Mammary epithelial cell (primary cell): ENCODE measurements at regions of chr7 and their contacts with region 1.

Region 1: GRCh38 chr7:130869918-130870317 is 135.9 kb upstream of the KLF14 start:
- DNase-seq: no peak
- H3K4me3 ChIP-seq: no peak overlapping the region
- H3K27ac ChIP-seq: no peak overlapping the region
- H3K4me1 ChIP-seq: peaks cover 18% of the 10 kb centered on the region
- H3K27me3 ChIP-seq: no peaks in the 10 kb centered on the region
- CTCF ChIP-seq: no peak

Region 2: DNA sequence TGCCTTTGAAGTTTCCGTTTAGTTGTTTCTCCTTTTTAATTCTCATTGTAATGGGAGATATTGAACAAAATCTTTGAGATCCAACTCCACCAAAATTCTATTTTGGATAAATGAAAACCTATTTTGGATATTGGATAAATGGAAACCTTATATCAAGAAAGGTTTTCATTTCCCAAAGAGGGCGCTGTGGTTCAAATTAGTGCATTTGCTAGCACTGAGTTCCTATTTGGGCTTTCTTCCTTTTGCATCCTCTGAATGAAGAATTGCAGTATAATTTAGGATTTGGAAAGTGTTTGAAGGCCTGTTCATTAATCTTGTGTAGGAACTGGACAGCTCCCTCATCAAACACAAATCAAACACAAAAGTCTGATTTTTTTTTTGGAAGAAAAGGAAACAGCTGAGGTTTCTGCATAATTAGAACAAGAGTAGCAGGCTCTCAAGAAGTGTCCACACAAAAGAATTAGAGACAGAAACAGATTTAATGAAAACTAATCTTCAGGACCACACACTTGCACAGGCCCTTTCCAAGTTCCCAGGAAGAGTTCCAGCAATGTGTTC is 55.1 kb before region 1 on chr7:
- CTCF ChIA-PET with region 1: no interaction called
- dilution Hi-C with region 1: no loop called
- in situ Hi-C with region 1: no loop called
- intact Hi-C with region 1: loop called (anchors 2 kb)
- DNase-seq: peak; percentile 20
- H3K4me3 ChIP-seq: no peak overlapping the region
- H3K27ac ChIP-seq: no peak overlapping the region
- H3K4me1 ChIP-seq: no peaks in the 10 kb centered on the region
- H3K27me3 ChIP-seq: no peaks in the 10 kb centered on the region
- CTCF ChIP-seq: peak; percentile 49 to 64

Region 3: DNA sequence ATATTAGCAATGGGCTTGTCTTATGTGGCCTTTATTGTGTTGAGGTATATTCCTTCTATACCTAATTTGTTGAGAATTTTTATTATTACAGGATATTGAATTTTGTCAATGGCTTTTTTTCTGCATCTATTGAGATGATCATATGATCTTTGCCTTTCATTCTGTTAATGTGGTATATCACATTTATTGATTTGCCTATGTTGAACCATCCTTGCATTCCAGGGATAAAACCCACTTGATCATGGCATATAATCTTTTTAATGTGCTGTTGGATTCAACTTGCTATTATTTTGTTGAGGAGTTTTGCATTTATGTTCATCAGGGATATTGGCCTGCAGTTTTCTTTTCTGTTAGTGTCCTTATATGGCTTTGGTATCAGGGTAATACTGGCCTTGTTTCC is 44.1 kb before region 1 on chr7:
- CTCF ChIA-PET with region 1: no interaction called
- dilution Hi-C with region 1: no loop called
- in situ Hi-C with region 1: no loop called
- intact Hi-C with region 1: no loop called
- DNase-seq: no peak
- H3K4me3 ChIP-seq: no peak overlapping the region
- H3K27ac ChIP-seq: no peak overlapping the region
- H3K4me1 ChIP-seq: no peaks in the 10 kb centered on the region
- H3K27me3 ChIP-seq: no peaks in the 10 kb centered on the region
- CTCF ChIP-seq: no peak